ENCODE measurements at regions of chr1 and their contacts with region 1.

Region 1: DNA sequence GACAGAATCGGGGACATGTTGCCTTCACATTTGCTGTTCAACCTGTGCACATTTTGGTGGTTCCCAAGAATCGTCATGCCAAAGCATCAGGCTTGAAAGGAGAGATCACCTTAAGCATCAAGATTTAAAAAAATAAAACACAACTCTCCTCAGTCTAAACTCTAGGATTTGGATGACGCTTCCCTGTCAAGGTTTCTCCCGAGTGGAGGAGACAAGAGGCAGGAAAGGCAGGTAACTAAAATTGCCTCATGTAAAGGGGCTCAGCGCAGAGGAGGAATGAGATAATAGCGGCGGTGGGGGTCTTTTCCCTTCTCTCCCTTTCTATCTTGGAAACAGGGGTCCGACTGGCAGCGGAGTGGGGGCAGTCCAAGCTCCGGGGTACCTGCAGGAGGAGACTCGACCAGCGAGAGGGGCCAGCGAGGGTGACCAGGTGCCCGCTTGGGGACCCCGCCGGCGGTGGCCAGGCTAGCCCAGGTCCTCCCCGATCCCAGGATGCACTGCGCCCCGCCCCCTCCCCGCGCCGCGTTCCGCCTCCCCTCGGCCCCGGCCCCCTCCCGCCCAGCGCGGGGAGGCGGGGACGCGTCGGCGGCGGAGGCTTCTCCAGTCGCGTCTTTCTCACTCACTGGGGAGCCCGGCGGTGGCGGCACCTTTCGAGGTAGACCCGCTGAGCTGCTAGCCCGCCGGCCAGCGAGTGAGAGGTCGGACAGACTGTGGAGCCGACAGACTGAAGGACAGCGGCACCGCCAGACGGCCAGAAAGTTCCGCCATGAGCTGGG is at the start of gene FNBP1L:
- DNase-seq: peak; percentile 20 to 79 (median 54)
- ATAC-seq: peak; percentile 82
- H3K4me3 ChIP-seq: peak within 1 kb of the TSS; percentile 65
- H3K4me3 Mint-ChIP-seq: peak within 1 kb of the TSS; percentile 97
- H3K27ac ChIP-seq: no peak within 1 kb of the TSS
- H3K27ac Mint-ChIP-seq: peak within 1 kb of the TSS; percentile 59
- H3K4me1 ChIP-seq: peaks cover 20% of the 10 kb centered on the region
- H3K4me1 Mint-ChIP-seq: peaks cover 27% of the 10 kb centered on the region
- H3K27me3 ChIP-seq: peaks cover 16 to 37% of the 10 kb centered on the region in 2 experiments
- H3K27me3 Mint-ChIP-seq: peaks cover 42% of the 10 kb centered on the region
- CTCF ChIP-seq: no peak
- total RNA-seq, gene FNBP1L: 1.1 TPM

Region 2: GRCh38 chr1:93304716-93305138 is 143.0 kb before region 1 on chr1:
- CTCF ChIA-PET with region 1: interaction called, 3 read pairs
- POLR2A ChIA-PET with region 1: interaction called, 4 read pairs
- intact Hi-C with region 1: loop called (anchors 5 to 10 kb)
- DNase-seq: peak in 12 of 14 experiments; percentile 5 to 80 (median 34)
- ATAC-seq: peak; percentile 73
- H3K4me3 ChIP-seq: no peak overlapping the region
- H3K4me3 Mint-ChIP-seq: no peak overlapping the region
- H3K27ac ChIP-seq: no peak overlapping the region
- H3K27ac Mint-ChIP-seq: no peak overlapping the region
- H3K4me1 ChIP-seq: no peaks in the 10 kb centered on the region
- H3K4me1 Mint-ChIP-seq: no peaks in the 10 kb centered on the region
- H3K27me3 ChIP-seq: no peaks in the 10 kb centered on the region
- H3K27me3 Mint-ChIP-seq: no peaks in the 10 kb centered on the region
- CTCF ChIP-seq: peak; percentile 92

Region 3: GRCh38 chr1:93384656-93385055 is 63.0 kb before region 1 on chr1:
- CTCF ChIA-PET with region 1: no interaction called
- POLR2A ChIA-PET with region 1: no interaction called
- intact Hi-C with region 1: no loop called
- DNase-seq: no peak
- ATAC-seq: no peak
- H3K4me3 ChIP-seq: no peak overlapping the region
- H3K4me3 Mint-ChIP-seq: no peak overlapping the region
- H3K27ac ChIP-seq: no peak overlapping the region
- H3K27ac Mint-ChIP-seq: no peak overlapping the region
- H3K4me1 ChIP-seq: no peaks in the 10 kb centered on the region
- H3K4me1 Mint-ChIP-seq: no peaks in the 10 kb centered on the region
- H3K27me3 ChIP-seq: no peaks in the 10 kb centered on the region
- H3K27me3 Mint-ChIP-seq: no peaks in the 10 kb centered on the region
- CTCF ChIP-seq: no peak

Region 4: GRCh38 chr1:94417978-94418663 is 970.4 kb after region 1 on chr1 and contains the start of gene ABCD3:
- CTCF ChIA-PET with region 1: no interaction called
- POLR2A ChIA-PET with region 1: no interaction called
- intact Hi-C with region 1: loop called in 1 of 2 experiments (anchors 10 kb)
- DNase-seq: peak; percentile 92 to 99 (median 97)
- ATAC-seq: peak; percentile 87
- H3K4me3 ChIP-seq: peak within 1 kb of the TSS; percentile 82
- H3K4me3 Mint-ChIP-seq: no peak within 1 kb of the TSS
- H3K27ac ChIP-seq: peak within 1 kb of the TSS; percentile 61 to 77
- H3K27ac Mint-ChIP-seq: no peak within 1 kb of the TSS
- H3K4me1 ChIP-seq: peaks cover 14% of the 10 kb centered on the region
- H3K4me1 Mint-ChIP-seq: peaks cover 41% of the 10 kb centered on the region
- H3K27me3 ChIP-seq: no peaks in the 10 kb centered on the region
- H3K27me3 Mint-ChIP-seq: no peaks in the 10 kb centered on the region
- CTCF ChIP-seq: no peak
- total RNA-seq, gene ABCD3: 13.0 to 13.5 TPM